Activated CD4-positive, alpha-beta T cell treated with anti-CD3 and anti-CD28 coated beads, Interleukin-2, amount 10 ng/mL, durations not matched to agents 7 days and 5 days (primary cell): ENCODE measurements at regions of chr1 and their contacts with region 1.

Region 1: DNA sequence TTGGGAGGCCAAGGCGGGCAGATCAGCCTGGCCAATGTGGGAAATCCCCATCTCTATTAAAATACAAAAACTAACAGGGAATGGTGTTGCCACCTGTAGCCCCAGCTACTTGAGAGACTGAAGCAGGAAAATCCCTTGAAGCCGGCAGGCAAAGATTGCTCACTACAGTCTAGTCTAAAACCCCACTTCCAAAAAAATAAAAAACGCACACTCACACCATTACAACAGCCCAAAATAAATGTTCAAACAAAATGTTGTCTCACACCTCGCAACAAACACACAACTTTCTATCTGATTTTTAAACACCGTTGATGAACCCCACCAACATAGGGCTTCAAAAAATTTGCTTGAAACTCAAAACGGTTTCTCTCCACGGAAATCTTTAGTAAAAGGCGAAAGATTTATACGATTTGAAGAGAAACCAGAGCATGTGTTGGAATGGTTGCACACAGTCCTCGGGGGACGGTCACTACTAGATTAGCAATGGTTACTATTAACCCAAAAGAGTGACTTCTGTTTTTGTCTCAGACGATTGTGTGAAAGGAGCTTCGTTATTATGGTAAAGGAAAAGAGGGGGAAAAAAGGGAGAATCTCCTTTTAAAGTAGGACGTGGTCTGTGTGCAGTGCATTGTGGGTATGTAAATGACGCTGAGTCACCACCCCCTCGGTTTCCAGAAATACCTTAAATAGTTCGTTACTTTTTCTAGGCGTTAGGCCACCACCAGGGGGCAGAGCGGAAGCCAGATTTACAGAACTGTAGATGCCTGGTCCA is at the start of gene RNU5D-1:
- DNase-seq: peak; percentile 96
- H3K4me3 Mint-ChIP-seq: peak within 1 kb of the TSS; percentile 61
- H3K27ac Mint-ChIP-seq: peak within 1 kb of the TSS; percentile 99
- H3K4me1 Mint-ChIP-seq: peaks cover 47% of the 10 kb centered on the region
- H3K27me3 Mint-ChIP-seq: no peaks in the 10 kb centered on the region
- total RNA-seq, gene RNU5D-1: not detected

Region 2: GRCh38 chr1:44747878-44748277 is 17.0 kb after region 1 on chr1:
- CTCF ChIA-PET with region 1: interaction called, 12 read pairs
- POLR2A ChIA-PET with region 1: interaction called, 7 read pairs
- DNase-seq: no peak
- H3K4me3 Mint-ChIP-seq: no peak overlapping the region
- H3K27ac Mint-ChIP-seq: peak overlapping the region; percentile 6
- H3K4me1 Mint-ChIP-seq: peaks cover 33% of the 10 kb centered on the region
- H3K27me3 Mint-ChIP-seq: no peaks in the 10 kb centered on the region

Region 3: GRCh38 chr1:44786138-44786840 is 55.4 kb after region 1 on chr1:
- CTCF ChIA-PET with region 1: interaction called, 15 read pairs
- POLR2A ChIA-PET with region 1: interaction called, 3 read pairs
- DNase-seq: peak; percentile 72
- H3K4me3 Mint-ChIP-seq: peak overlapping the region; percentile 56
- H3K27ac Mint-ChIP-seq: peak overlapping the region; percentile 78
- H3K4me1 Mint-ChIP-seq: peaks cover 35% of the 10 kb centered on the region
- H3K27me3 Mint-ChIP-seq: no peaks in the 10 kb centered on the region